Ovary (tissue), 10 donors: ENCODE measurements at regions of chr6 and their contacts with region 1.

Region 1: GRCh38 chr6:167153521-167153959 is 4.2 kb downstream of the GPR31 start:
- DNase-seq: no peak
- H3K4me3 ChIP-seq: no peak overlapping the region
- H3K27ac ChIP-seq: no peak overlapping the region
- H3K4me1 ChIP-seq: no peaks in the 10 kb centered on the region
- H3K27me3 ChIP-seq: no peaks in the 10 kb centered on the region
- CTCF ChIP-seq: no peak
- EP300 ChIP-seq: no peak
- POLR2A ChIP-seq: no peak

Region 2: DNA sequence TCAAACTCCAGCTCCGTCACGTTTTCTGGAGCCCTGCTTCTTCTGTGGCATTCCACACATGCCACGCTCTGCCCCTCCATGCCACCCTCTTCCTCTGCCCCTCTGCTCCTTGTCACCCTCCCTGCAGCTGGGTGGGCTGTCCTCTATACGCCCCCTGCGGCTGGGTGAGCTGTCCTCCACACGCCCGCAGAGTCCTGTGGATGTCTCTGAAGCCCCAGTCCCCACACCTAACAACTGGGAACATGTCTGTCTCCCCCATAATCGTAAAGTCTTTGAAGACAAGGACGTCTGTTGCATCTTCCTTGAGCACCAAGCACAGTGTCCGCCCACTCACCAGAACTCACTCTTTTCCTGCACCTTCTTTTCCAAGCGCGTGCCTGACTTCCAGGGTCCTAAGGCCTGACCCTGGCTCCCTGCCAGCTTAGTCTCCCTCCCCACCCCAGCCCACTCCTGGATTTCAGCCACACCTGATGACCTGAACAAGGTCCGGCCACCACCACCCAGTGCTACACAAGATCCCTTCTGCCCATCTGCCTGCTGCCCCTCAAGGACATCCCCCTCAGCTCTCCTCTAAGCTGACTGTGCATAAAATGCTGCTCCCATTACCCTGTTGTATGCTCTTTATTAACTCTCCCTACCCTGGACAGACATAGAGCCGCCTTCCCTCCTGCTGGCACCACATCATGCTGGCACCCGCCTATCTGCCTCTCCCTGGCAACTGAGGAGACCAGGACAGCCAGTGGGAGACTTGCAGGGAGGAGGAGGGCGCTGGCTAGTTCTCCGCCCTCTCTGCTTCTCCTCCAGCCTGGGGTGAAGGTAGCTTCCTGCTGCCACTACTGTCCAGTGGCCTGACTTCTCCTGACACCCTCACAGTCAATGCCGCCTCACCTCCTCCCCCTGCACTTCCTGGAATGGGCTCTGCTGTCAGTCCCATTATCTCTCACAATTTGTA is 834.6 kb before region 1 on chr6:
- intact Hi-C with region 1: loop called in 1 of 4 experiments (anchors 5 kb)
- DNase-seq: no peak
- H3K4me3 ChIP-seq: no peak overlapping the region
- H3K27ac ChIP-seq: no peak overlapping the region
- H3K4me1 ChIP-seq: no peaks in the 10 kb centered on the region
- H3K27me3 ChIP-seq: no peaks in the 10 kb centered on the region
- CTCF ChIP-seq: no peak
- EP300 ChIP-seq: no peak
- POLR2A ChIP-seq: no peak

Region 3: DNA sequence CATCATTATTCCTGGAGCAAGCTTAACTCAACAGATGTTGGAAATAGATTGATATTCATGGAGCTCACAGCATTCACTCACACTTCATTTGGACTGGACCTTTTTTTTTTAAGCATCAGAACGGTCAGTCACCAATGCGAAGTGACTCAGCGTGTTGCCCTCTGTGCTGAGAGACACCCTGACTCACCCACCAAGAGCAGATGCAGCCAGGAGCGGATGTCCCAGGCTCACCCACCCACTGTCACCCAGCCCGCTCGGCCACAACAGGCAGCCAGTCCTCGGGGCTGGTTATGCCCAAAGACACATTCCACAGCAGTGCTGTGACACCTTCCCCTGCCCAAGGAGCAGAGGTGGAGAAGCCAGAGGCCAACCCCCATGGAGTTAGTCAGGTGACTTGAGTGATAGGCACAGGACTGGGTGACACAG is 212.9 kb before region 1 on chr6:
- intact Hi-C with region 1: no loop called
- DNase-seq: no peak
- H3K4me3 ChIP-seq: no peak overlapping the region
- H3K27ac ChIP-seq: no peak overlapping the region
- H3K4me1 ChIP-seq: no peaks in the 10 kb centered on the region
- H3K27me3 ChIP-seq: no peaks in the 10 kb centered on the region
- CTCF ChIP-seq: no peak
- EP300 ChIP-seq: no peak
- POLR2A ChIP-seq: no peak

Region 4: DNA sequence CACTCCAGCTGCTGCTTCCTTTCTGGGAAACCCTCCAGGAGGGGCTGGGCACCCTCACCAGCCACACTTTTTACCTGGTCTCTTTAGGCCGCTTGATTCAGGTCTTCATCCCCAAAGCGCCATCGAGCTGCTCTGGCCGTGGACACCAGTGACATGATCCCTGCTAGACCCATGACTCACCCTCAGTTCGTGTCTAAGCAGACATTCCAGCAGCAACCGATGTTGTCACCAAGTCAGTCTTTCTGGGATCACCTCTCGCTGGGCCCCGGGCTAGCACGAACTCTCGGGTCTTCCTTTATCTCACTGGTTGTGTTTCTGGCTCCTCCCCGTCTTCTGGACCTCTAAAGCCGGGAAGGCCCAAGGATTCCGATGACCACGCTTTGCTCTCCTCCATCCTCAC is 47.3 kb after region 1 on chr6:
- intact Hi-C with region 1: no loop called
- DNase-seq: no peak
- H3K4me3 ChIP-seq: no peak overlapping the region
- H3K27ac ChIP-seq: no peak overlapping the region
- H3K4me1 ChIP-seq: no peaks in the 10 kb centered on the region
- H3K27me3 ChIP-seq: no peaks in the 10 kb centered on the region
- CTCF ChIP-seq: no peak
- EP300 ChIP-seq: no peak
- POLR2A ChIP-seq: no peak